Activated T-helper 1 cell treated with anti-CD3 and anti-CD28 coated beads, Interleukin-12 subunit alpha, Interleukin-12 subunit beta, Interleukin-2, Interleukin-4 antibody, amounts not matched to agents 30 ng/mL and 10 ng/mL and 1 ng/mL, durations not matched to agents 14 hours and 24 hours and 36 hours (primary cell): ENCODE measurements at regions of chr2 and their contacts with region 1.

Region 1: DNA sequence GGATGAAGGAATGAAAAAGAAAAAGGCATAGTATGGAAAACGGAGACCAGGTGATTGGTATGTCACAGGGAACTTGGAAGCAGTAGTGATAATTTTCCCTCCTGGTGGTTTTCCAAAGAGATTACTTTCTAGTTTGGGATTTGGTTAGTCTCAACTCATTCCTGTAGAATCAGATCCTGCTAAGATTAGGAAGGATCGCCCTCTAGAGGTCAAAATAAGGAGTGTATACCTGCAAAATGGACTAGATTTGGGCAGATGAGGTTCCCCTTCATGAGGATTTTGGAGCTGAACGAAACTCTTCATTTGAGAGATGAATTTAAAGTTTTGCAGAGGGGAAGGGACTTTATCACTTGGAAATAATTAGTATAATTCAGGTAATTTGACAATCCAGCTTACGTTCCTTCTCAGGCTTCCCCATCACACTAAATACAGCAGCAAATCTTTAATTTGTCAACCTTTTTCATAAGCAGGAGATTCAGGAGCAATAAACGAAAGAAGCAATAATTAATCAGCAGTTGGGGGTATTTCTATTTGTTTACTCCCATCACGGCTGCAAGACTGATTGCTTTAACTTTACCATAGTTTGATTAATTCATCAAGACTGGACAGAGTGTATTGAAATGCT is 65.2 kb downstream of the CCDC195 start:
- DNase-seq: no peak
- H3K4me3 Mint-ChIP-seq: no peak overlapping the region
- H3K27ac Mint-ChIP-seq: no peak overlapping the region
- H3K4me1 Mint-ChIP-seq: no peaks in the 10 kb centered on the region
- H3K27me3 Mint-ChIP-seq: no peaks in the 10 kb centered on the region

Region 2: DNA sequence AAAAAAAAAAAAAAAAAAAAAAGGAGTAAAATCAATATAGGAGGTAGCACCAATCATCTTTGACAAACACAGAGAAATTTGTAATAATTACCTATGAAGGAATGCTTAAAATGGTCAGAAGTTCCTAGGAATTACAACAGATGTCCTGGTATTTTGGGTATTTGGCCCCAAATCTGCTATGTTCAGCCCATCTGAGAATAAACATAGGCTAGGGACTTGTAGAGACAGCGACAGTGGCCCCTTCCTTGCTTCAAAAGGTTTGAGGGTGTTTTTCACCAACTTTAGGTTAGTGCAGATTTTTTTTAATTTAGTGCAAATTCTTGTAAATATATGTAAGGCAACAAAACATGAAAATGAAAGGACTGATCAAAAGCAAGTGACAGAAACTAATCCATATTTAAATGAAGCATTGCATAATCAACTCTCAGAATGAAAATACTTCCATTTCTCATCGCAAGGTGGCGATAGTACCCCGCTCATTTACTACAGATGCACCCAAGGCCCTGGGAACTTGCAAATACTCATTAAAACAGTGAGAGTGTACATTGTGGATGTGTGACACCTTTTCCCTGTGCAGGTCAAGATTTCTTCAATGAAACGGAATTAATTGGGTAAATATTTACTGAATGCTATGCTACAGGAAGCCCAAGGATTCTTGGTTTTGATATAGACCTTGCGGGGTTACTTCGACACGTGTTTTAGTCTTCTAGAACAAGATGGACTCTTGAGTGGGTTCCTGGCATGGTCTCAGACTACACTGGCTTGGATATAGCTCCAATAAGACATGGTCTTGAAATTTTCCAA is 293.6 kb before region 1 on chr2:
- intact Hi-C with region 1: loop called (anchors 1 kb)
- DNase-seq: peak; percentile 35
- H3K4me3 Mint-ChIP-seq: no peak overlapping the region
- H3K27ac Mint-ChIP-seq: no peak overlapping the region
- H3K4me1 Mint-ChIP-seq: no peaks in the 10 kb centered on the region
- H3K27me3 Mint-ChIP-seq: peaks cover 9% of the 10 kb centered on the region

Region 3: DNA sequence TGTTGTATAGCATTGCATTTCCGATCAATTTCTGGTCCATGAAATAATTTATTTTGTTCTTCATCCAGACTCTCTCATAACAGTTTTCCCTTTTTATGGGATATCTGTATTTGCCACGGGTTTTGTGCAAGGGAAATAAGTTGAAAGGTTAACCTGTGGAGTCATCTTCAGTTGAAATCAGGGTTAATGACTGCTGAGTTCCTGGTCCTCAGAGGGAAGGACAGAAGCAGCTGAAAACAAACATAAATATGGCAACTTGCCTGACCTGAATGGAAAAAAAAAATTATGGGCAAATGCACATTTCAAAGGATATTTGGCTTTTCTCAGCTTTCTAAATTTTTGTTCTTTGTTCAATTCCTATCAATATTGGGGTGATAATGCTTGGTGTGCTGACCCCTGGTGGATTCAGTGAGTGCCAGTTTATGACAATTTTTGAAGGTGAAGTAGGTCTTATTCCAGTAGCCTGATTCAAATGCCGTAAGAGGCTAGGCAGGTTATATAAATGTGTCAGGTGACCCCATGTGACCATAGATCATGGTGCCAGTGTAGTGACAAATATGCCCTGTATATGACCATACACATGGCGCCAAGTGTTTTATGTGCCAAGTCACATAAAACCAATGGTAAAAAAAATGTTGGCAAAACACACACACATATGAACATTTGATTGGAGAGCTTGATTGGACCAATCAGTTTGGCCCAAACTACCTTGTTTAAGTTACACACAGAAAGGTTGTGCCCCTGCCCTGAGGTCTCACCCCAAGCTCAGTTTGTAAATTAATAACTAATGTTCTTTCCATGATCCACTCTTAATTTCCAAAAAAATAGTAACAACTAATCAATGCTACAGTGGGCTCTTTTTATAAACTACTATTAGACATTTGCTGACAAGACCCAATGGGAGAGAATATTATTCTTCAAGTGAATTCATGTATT is 201.4 kb before region 1 on chr2:
- intact Hi-C with region 1: loop called (anchors 5 kb)
- DNase-seq: no peak
- H3K4me3 Mint-ChIP-seq: no peak overlapping the region
- H3K27ac Mint-ChIP-seq: no peak overlapping the region
- H3K4me1 Mint-ChIP-seq: no peaks in the 10 kb centered on the region
- H3K27me3 Mint-ChIP-seq: peaks cover 18% of the 10 kb centered on the region

Region 4: DNA sequence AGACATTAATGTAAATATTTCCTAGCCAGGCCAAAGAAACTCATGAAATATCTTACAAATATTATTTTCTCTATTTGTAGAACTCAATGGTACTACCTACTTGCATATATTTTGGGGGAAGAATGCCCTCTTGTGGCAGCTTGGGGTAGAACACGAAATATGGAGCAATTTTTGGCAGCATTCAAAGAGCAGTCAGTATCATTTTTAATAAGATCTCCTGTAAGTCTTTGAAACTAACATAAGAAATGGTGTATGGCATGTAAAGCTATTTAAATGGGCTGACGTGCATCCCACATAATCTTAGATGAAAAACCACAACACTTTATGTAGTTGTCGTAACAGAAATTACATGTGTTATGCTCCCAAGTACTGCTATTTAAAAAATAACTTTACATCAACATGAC is 127.5 kb after region 1 on chr2:
- intact Hi-C with region 1: loop called (anchors 2 kb)
- DNase-seq: peak; percentile 35
- H3K4me3 Mint-ChIP-seq: no peak overlapping the region
- H3K27ac Mint-ChIP-seq: no peak overlapping the region
- H3K4me1 Mint-ChIP-seq: peaks cover 7% of the 10 kb centered on the region
- H3K27me3 Mint-ChIP-seq: no peaks in the 10 kb centered on the region

Region 5: DNA sequence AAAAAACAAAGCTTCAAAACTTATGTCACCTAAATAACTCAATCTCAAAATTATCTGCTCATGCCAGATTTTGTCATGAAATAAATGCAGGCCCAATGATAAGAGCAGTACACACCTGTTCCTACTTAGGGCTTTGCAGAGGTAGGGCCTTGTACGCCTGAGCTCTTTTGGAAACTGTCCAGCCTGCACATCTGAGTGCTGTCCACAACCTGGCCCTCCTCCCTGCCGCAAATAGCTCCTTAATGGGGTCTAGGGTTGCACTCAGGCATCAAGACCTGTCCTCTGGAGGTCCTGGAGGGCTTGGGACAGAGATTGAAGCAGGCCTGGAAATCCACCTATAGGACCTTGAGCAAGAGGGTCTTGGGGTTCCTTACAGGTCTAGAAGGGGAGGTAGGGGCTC is 180.6 kb after region 1 on chr2:
- intact Hi-C with region 1: no loop called
- DNase-seq: no peak
- H3K4me3 Mint-ChIP-seq: no peak overlapping the region
- H3K27ac Mint-ChIP-seq: no peak overlapping the region
- H3K4me1 Mint-ChIP-seq: no peaks in the 10 kb centered on the region
- H3K27me3 Mint-ChIP-seq: no peaks in the 10 kb centered on the region

Region 6: GRCh38 chr2:225660262-225661131 is 1009.6 kb after region 1 on chr2:
- intact Hi-C with region 1: loop called (anchors 5 kb)
- DNase-seq: peak; percentile 43
- H3K4me3 Mint-ChIP-seq: no peak overlapping the region
- H3K27ac Mint-ChIP-seq: no peak overlapping the region
- H3K4me1 Mint-ChIP-seq: no peaks in the 10 kb centered on the region
- H3K27me3 Mint-ChIP-seq: peaks cover 18% of the 10 kb centered on the region